Gastrocnemius medialis (tissue), 4 donors: ENCODE measurements at regions of chr5 and their contacts with region 1.

Region 1: DNA sequence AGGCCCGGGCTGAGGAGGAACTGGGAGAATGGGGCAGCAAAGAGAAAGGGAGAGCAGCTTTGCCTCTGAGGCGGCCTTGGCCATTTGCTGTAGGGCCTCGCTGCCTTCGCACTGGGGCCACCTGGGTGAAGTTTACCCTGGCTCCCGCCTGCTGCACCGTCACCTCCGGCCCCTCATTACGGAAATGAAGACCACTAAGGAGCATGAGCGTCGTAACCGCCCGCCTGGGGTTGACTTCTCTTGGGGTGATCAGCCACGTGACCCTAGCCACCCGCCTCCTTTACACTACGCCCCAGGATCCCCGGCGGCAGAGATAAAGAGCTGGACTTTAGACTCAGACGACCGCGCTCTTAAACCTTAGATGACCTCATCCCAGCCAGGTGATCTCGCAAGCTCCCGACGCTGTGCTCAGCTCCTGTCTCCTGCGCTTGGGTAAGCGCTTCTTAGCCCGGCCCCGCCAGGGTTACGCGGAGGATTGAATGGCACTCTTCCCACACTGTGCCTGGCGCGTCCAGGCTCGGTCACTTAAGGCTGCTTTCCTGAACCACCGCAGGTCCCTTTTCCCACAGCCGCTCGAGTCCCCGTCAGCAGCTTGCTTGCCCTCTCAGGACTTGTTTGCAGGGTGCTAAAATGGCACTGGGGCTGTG is 107.9 kb upstream of the LARP1 start:
- DNase-seq: peak; percentile 5 to 73
- ATAC-seq: peak; percentile 56 to 79
- H3K4me3 ChIP-seq: peak overlapping the region; percentile 19 to 46 (median 36)
- H3K27ac ChIP-seq: no peak overlapping the region
- H3K4me1 ChIP-seq: peaks cover 5 to 7% of the 10 kb centered on the region in 2 donors
- H3K27me3 ChIP-seq: no peaks in the 10 kb centered on the region
- CTCF ChIP-seq: no peak
- POLR2A ChIP-seq: no peak

Region 2: GRCh38 chr5:154663424-154663823 is 16.2 kb after region 1 on chr5:
- in situ Hi-C with region 1: no loop called
- intact Hi-C with region 1: no loop called
- DNase-seq: no peak
- ATAC-seq: no peak
- H3K4me3 ChIP-seq: no peak overlapping the region
- H3K27ac ChIP-seq: no peak overlapping the region
- H3K4me1 ChIP-seq: no peaks in the 10 kb centered on the region
- H3K27me3 ChIP-seq: no peaks in the 10 kb centered on the region
- CTCF ChIP-seq: no peak
- POLR2A ChIP-seq: no peak

Region 3: DNA sequence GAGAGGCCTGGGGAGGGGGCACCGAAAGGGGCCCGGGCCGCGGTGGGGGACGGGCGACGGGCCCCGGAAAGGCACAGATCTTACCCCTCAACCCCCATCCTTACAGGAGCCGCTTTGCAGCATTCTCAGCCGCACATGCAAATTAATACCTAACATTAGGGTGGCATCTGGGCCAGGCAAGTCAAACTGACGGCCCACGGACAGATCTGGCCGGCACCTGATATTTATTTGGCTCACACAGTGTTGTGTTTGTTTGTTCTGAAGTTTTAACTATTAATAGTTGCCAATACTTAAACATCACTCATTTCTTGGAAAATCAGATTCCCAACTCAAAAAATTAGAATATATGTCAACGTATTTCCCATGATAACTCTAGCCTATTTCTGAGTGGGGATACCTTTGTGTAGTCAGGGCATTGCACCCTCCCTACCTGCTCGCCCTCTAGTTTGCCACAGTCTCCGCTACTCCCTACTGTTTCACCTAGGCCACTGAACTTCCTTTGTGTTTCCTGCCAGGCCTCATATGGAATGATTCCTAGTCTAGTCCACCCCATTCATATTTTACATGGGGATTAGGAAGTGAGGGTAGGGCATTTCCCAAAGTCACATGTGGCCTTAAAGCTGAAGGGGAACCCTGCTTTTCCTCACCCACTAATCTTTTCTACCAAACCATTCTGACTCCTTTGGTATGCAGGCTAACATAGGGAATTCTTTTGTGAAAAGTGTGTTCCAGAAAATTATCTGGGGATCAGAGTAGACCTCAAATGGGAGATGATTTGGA is 36.1 kb after region 1 on chr5:
- in situ Hi-C with region 1: no loop called
- intact Hi-C with region 1: loop called (anchors 2 kb)
- DNase-seq: no peak
- ATAC-seq: peak; percentile 32 to 42
- H3K4me3 ChIP-seq: peak overlapping the region; percentile 64 to 71 (median 68)
- H3K27ac ChIP-seq: peak overlapping the region; percentile 92 to 95 (median 95)
- H3K4me1 ChIP-seq: peaks cover 15 to 34% of the 10 kb centered on the region in 2 donors
- H3K27me3 ChIP-seq: no peaks in the 10 kb centered on the region
- CTCF ChIP-seq: no peak
- POLR2A ChIP-seq: no peak

Region 4: DNA sequence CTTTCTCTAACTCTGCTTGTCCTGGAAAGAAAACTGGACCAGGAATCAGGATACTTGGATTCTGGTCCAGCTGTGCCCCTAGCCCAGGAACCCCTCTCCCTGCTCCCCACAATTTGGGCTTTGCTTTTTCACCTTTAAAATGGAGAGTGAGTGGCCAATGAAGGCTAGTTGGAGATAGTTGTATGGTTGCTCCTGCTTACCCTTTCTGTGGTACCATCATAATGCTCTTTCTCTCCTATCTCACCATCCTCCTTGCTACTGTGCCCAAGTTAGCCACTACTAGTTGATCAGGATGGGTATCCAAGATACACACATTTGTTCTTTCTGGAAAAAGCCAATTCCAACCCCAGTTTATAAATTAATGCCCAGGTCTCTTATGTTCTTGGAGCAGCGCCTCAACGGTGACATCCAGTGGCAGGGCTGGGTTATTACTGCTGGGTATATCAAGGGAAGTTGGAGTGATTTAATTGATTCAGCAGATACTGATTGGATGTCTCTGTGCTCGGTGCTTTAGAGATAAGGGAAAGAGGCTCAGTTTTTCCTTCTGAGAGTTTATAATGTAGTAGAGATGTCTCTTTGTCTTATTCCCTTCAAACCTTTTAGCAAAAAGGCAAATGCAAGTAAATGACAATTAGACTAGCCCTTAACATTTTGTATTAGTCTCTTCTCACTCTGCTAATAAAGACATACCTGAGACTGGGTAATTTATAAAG is 164.6 kb after region 1 on chr5:
- in situ Hi-C with region 1: loop called in 3 of 4 experiments (anchors 5 to 10 kb)
- intact Hi-C with region 1: loop called (anchors 1 kb)
- DNase-seq: peak; percentile 24 to 53
- ATAC-seq: peak; percentile 49 to 72
- H3K4me3 ChIP-seq: no peak overlapping the region
- H3K27ac ChIP-seq: peak overlapping the region; percentile 2 to 29 (median 20)
- H3K4me1 ChIP-seq: no peaks in the 10 kb centered on the region
- H3K27me3 ChIP-seq: no peaks in the 10 kb centered on the region
- CTCF ChIP-seq: peak; percentile 84 to 93 (median 89)
- POLR2A ChIP-seq: no peak